HEK293 (cell line): ENCODE measurements at regions of chr7 and their contacts with region 1.

Region 1: GRCh38 chr7:97027427-97028234 is 3.0 kb upstream of the DLX5 start:
- H3K4me3 ChIP-seq: peak overlapping the region; percentile 6; the same call in 1 of the 2 replicates
- H3K27ac ChIP-seq: no peak overlapping the region
- H3K4me1 ChIP-seq: no peaks in the 10 kb centered on the region; the same call in 1 of the 2 replicates
- CTCF ChIP-seq: peak; percentile 90

Region 2: GRCh38 chr7:95723592-95724180 is 1303.9 kb before region 1 on chr7:
- CTCF ChIA-PET with region 1: interaction called, 11 read pairs
- POLR2A ChIA-PET with region 1: no interaction called
- H3K4me3 ChIP-seq: no peak overlapping the region
- H3K27ac ChIP-seq: no peak overlapping the region
- H3K4me1 ChIP-seq: no peaks in the 10 kb centered on the region
- CTCF ChIP-seq: peak; percentile 68

Region 3: GRCh38 chr7:95916573-95917297 is 1110.9 kb before region 1 on chr7:
- CTCF ChIA-PET with region 1: interaction called, 35 read pairs
- POLR2A ChIA-PET with region 1: no interaction called
- H3K4me3 ChIP-seq: no peak overlapping the region
- H3K27ac ChIP-seq: no peak overlapping the region
- H3K4me1 ChIP-seq: no peaks in the 10 kb centered on the region
- CTCF ChIP-seq: peak; percentile 74

Region 4: GRCh38 chr7:96075510-96076349 is 951.9 kb before region 1 on chr7:
- CTCF ChIA-PET with region 1: interaction called, 25 read pairs
- POLR2A ChIA-PET with region 1: no interaction called
- H3K4me3 ChIP-seq: peak overlapping the region; percentile 69
- H3K27ac ChIP-seq: peak overlapping the region; percentile 20; the same call in 1 of the 2 replicates
- H3K4me1 ChIP-seq: no peaks in the 10 kb centered on the region
- CTCF ChIP-seq: peak; percentile 72

Region 5: GRCh38 chr7:96996105-96996957 is 31.3 kb before region 1 on chr7:
- CTCF ChIA-PET with region 1: interaction called, 10 read pairs
- POLR2A ChIA-PET with region 1: no interaction called
- H3K4me3 ChIP-seq: no peak overlapping the region
- H3K27ac ChIP-seq: no peak overlapping the region
- H3K4me1 ChIP-seq: no peaks in the 10 kb centered on the region
- CTCF ChIP-seq: no peak

Region 6: GRCh38 chr7:97006036-97006815 is 21.4 kb before region 1 on chr7:
- CTCF ChIA-PET with region 1: interaction called, 6 read pairs
- POLR2A ChIA-PET with region 1: interaction called, 13 read pairs
- H3K4me3 ChIP-seq: peak overlapping the region; percentile 72
- H3K27ac ChIP-seq: peak overlapping the region; percentile 84
- H3K4me1 ChIP-seq: peaks cover 3% of the 10 kb centered on the region; the same call in 1 of the 2 replicates
- CTCF ChIP-seq: peak; percentile 90